Psoas muscle (tissue), 8 donors: ENCODE measurements at regions of chr2 and their contacts with region 1.

Region 1: DNA sequence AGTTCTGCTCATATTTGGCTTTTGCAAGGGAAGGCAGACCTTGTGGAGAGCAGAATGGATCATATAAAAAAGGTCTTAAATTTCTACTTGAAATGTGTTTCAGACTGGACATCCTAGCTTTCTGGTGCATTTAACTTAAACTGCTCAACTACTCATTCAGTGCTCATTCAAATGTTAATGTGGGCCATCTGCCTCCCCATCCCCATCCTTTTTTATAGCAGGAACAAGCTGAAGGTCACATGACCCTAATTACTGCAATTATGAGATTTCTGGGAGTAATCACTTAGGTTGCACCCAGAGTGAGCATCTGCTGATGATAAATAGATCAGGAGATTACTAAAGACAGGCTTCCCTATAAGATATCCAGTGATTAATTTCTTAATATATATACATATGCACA is 96.1 kb downstream of the MAP2 start:
- DNase-seq: no peak
- ATAC-seq: no peak
- H3K4me3 ChIP-seq: no peak overlapping the region
- H3K27ac ChIP-seq: no peak overlapping the region
- H3K4me1 ChIP-seq: no peaks in the 10 kb centered on the region
- H3K27me3 ChIP-seq: no peaks in the 10 kb centered on the region
- CTCF ChIP-seq: no peak

Region 2: DNA sequence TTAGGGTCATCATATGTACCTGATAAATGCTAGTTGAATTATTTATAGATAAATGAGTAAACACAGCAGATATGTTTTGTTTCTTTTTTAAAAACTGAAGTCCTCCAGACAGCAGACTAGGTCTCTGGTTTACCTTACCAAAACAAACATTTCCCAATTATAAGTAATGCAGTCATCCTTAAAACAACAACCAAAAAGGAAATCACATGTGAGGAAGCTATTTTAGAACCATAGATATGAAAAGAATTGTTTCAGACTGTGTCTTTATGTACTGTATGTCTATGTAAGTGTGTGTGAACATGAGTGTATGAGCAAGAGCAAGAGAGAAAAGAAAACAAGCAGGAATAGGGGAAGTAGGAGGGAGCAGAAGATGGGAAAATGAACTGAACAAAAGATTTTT is 1477.5 kb after region 1 on chr2:
- intact Hi-C with region 1: loop called in 1 of 2 experiments (anchors 5 kb)
- DNase-seq: no peak
- ATAC-seq: no peak
- H3K4me3 ChIP-seq: no peak overlapping the region
- H3K27ac ChIP-seq: no peak overlapping the region
- H3K4me1 ChIP-seq: no peaks in the 10 kb centered on the region
- H3K27me3 ChIP-seq: no peaks in the 10 kb centered on the region
- CTCF ChIP-seq: no peak